Activated CD8-positive, alpha-beta memory T cell treated with anti-CD3 and anti-CD28 coated beads, Interleukin-2, amount 10 ng/mL, durations not matched to agents 7 days and 5 days (primary cell): ENCODE measurements at regions of chr3 and their contacts with region 1.

Region 1: DNA sequence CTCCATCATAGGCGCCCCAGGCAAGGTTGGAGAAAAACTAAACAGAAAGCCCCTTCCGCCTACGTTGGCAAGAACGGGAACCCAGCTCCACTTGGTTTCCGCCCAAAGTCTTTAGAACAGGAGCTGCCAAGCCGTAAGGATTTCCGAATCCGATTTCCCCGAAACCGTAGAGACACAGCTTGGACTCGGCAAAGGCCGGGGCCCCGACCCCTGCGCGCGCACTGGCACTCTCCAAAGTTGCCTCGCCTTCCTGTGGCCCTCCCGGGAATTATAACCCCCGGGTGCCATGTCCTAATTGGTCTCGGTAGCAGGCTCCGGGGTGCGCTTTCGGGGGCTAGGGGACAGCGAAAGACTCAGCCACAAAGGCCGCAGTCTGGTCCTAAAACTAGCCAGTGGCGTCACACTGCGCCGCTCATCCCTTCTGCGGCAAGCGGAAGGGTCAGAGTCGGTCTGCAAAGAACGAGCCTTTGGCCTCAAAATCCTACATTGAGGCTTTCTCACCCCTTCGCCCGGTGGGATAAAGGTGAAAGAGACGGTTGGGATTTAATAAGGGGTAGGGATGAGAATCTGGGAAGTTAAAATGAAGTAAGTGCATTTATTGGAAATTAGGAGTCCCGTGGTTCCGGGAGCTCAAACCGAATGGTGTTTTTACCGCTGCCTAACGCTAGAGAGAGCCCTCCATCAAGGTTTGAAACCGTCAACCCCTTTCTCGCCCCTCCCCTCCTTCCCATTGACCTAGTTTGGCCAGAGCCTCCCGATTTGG is 6.8 kb downstream of the BCL6 start:
- DNase-seq: peak; percentile 87
- ATAC-seq: peak; percentile 37
- H3K4me3 Mint-ChIP-seq: peak overlapping the region; percentile 98
- H3K27ac Mint-ChIP-seq: peak overlapping the region; percentile 99
- H3K4me1 Mint-ChIP-seq: peaks cover 38% of the 10 kb centered on the region
- H3K27me3 Mint-ChIP-seq: peaks cover 10% of the 10 kb centered on the region

Region 2: GRCh38 chr3:187777331-187777941 is 38.9 kb after region 1 on chr3:
- CTCF ChIA-PET with region 1: interaction called, 14 read pairs
- DNase-seq: peak; percentile 84
- ATAC-seq: peak; percentile 85
- H3K4me3 Mint-ChIP-seq: peak overlapping the region; percentile 34
- H3K27ac Mint-ChIP-seq: peak overlapping the region; percentile 89
- H3K4me1 Mint-ChIP-seq: peaks cover 48% of the 10 kb centered on the region
- H3K27me3 Mint-ChIP-seq: no peaks in the 10 kb centered on the region

Region 3: GRCh38 chr3:188041193-188041592 is 302.7 kb after region 1 on chr3:
- CTCF ChIA-PET with region 1: interaction called, 17 read pairs
- DNase-seq: no peak
- ATAC-seq: peak; percentile 37
- H3K4me3 Mint-ChIP-seq: no peak overlapping the region
- H3K27ac Mint-ChIP-seq: no peak overlapping the region
- H3K4me1 Mint-ChIP-seq: peaks cover 44% of the 10 kb centered on the region
- H3K27me3 Mint-ChIP-seq: peaks cover 8% of the 10 kb centered on the region

Region 4: DNA sequence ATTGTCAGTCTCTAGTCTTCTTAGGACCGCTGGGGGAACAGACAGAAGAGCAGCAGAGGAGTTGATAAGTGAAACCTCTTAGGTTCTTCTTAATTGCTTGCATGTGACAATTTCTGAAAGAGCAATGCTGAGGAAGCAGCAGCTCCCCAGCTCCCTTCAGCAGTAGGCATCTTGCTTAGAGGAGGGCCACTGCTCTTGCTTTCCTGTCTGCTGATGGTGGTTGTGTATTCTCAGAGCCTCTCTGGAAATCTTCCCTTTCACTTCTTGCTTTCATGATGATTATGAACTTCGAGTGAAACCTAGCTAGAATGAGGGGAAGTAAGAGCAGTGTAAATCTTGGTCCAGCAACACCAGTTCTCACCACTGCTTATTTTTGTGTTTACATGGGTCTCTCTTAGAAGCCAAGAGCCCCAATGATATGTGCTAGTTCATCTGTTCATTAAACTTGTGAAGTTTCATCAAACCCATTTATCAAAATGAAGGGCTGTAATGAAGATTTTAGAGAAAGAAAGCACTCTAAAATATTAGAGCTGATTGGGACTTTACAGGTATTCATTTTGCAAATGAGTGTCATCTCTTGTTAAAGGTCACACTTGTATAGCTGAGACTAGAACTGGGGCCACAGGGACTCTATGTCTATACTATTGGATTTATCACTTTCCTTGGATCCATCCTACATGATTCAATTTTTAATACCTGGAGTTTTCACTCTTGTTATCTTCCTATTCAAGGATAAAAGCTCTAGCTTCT is 662.2 kb after region 1 on chr3:
- CTCF ChIA-PET with region 1: interaction called, 14 read pairs
- DNase-seq: peak; percentile 53
- ATAC-seq: peak; percentile 79
- H3K4me3 Mint-ChIP-seq: no peak overlapping the region
- H3K27ac Mint-ChIP-seq: no peak overlapping the region
- H3K4me1 Mint-ChIP-seq: peaks cover 58% of the 10 kb centered on the region
- H3K27me3 Mint-ChIP-seq: peaks cover 2% of the 10 kb centered on the region

Region 5: GRCh38 chr3:188946351-188947240 is 1208.1 kb after region 1 on chr3:
- CTCF ChIA-PET with region 1: interaction called, 391 read pairs
- DNase-seq: no peak
- ATAC-seq: no peak
- H3K4me3 Mint-ChIP-seq: no peak overlapping the region
- H3K27ac Mint-ChIP-seq: no peak overlapping the region
- H3K4me1 Mint-ChIP-seq: peaks cover 17% of the 10 kb centered on the region
- H3K27me3 Mint-ChIP-seq: peaks cover 18% of the 10 kb centered on the region

Region 6: GRCh38 chr3:189132231-189132707 is 1393.8 kb after region 1 on chr3:
- CTCF ChIA-PET with region 1: interaction called, 42 read pairs
- DNase-seq: peak; percentile 93
- ATAC-seq: peak; percentile 99
- H3K4me3 Mint-ChIP-seq: peak overlapping the region; percentile 57
- H3K27ac Mint-ChIP-seq: peak overlapping the region; percentile 98
- H3K4me1 Mint-ChIP-seq: peaks cover 31% of the 10 kb centered on the region
- H3K27me3 Mint-ChIP-seq: no peaks in the 10 kb centered on the region